ENCODE measurements at regions of chr17 and their contacts with region 1.

Region 1: DNA sequence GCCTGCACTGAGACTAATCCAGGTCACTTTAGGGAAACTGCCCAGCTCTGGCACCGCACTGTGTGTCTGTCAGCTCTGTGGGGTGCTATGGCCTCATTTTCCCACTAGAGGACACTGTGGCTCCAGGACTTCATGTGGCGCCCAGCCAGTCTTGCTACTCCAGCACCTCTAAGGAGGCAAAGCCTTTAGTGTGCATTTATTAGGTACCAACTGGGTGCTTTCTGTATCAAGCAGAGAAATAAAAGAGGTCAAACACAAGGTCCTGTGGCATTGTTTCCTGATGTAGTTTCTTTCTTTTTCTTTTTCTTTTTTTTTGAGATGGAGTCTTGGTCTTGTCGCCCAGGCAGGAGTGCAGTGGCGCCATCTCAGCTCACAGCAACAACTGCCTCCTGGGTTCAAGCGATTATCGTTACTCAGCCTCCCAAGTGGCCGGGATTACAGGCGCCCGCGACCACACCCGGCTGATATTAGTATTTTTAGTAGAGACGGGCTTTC is 12.5 kb upstream of the RHBDL3 start:
- DNase-seq: peak; percentile 90
- H3K4me3 ChIP-seq: no peak overlapping the region
- H3K27ac ChIP-seq: no peak overlapping the region
- H3K4me1 ChIP-seq: peaks cover 8% of the 10 kb centered on the region
- H3K27me3 ChIP-seq: no peaks in the 10 kb centered on the region
- CTCF ChIP-seq: peak; percentile 61 to 90 (median 81)
- POLR2A ChIP-seq: no peak

Region 2: DNA sequence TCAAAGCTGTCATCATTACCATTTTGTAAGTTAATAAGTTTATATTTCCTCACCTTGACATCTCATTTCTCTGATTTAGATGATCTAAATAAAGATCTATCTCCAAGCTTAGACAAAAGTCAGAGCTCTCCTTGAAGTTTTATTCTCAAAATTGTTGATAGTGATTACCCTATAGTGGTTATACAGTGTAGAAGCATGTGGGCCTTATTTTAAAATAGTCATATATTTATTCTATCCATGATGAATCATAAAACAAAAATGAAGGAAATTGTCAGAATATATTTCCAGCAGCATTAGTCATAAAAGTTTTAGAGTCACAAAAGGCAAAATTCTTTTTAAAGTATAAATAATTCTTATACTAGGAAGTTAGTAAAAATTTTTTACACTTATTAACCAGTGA is 61.9 kb before region 1 on chr17:
- intact Hi-C with region 1: no loop called
- DNase-seq: no peak
- H3K4me3 ChIP-seq: no peak overlapping the region
- H3K27ac ChIP-seq: no peak overlapping the region
- H3K4me1 ChIP-seq: no peaks in the 10 kb centered on the region
- H3K27me3 ChIP-seq: no peaks in the 10 kb centered on the region
- CTCF ChIP-seq: no peak
- POLR2A ChIP-seq: no peak

Region 3: DNA sequence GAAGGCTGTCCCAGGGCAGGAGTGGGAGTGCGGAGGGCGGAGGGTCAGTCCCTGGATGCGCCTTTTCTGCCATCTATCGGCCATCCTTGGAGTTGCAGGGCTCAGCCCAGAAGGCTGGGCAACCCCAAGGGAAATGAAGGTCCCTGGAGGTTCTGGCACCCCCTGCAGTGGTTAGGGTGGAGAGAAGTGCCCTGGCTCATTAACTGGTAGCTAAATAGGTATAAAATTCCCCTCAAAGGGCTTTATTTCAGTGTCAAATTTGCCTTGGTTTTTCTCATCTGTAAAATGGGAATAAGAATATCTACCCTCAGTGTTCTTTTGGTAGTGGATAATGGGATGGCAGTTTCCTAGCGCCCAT is 66.4 kb after region 1 on chr17:
- intact Hi-C with region 1: loop called (anchors 10 kb)
- DNase-seq: peak; percentile 88
- H3K4me3 ChIP-seq: no peak overlapping the region
- H3K27ac ChIP-seq: no peak overlapping the region
- H3K4me1 ChIP-seq: no peaks in the 10 kb centered on the region
- H3K27me3 ChIP-seq: no peaks in the 10 kb centered on the region
- CTCF ChIP-seq: peak; percentile 71 to 92 (median 82)
- POLR2A ChIP-seq: no peak

Region 4: GRCh38 chr17:32398946-32399345 is 145.8 kb after region 1 on chr17:
- intact Hi-C with region 1: no loop called
- DNase-seq: no peak
- H3K4me3 ChIP-seq: no peak overlapping the region
- H3K27ac ChIP-seq: no peak overlapping the region
- H3K4me1 ChIP-seq: no peaks in the 10 kb centered on the region
- H3K27me3 ChIP-seq: no peaks in the 10 kb centered on the region
- CTCF ChIP-seq: no peak
- POLR2A ChIP-seq: no peak

Measured in testis (tissue), 5 donors.